Mammary epithelial cell (primary cell): ENCODE measurements at regions of chr17 and their contacts with region 1.

Region 1: GRCh38 chr17:1055751-1056645 is 59.1 kb downstream of the TIMM22 start:
- DNase-seq: peak; percentile 27
- H3K4me3 ChIP-seq: no peak overlapping the region
- H3K27ac ChIP-seq: no peak overlapping the region
- H3K4me1 ChIP-seq: peaks cover 5% of the 10 kb centered on the region
- H3K27me3 ChIP-seq: no peaks in the 10 kb centered on the region
- CTCF ChIP-seq: peak; percentile 40 to 75

Region 2: GRCh38 chr17:996554-997344 is 59.2 kb before region 1 on chr17 and contains the start of gene TIMM22:
- CTCF ChIA-PET with region 1: interaction called, 4 read pairs
- dilution Hi-C with region 1: no loop called
- in situ Hi-C with region 1: no loop called
- intact Hi-C with region 1: loop called (anchors 2 kb)
- DNase-seq: peak; percentile 98
- H3K4me3 ChIP-seq: peak within 1 kb of the TSS; percentile 85 to 100 (median 87)
- H3K27ac ChIP-seq: peak within 1 kb of the TSS; percentile 94
- H3K4me1 ChIP-seq: peaks cover 25% of the 10 kb centered on the region
- H3K27me3 ChIP-seq: no peaks in the 10 kb centered on the region
- CTCF ChIP-seq: peak; percentile 93
- total RNA-seq, gene TIMM22: 14.3 to 17.2 TPM

Region 3: DNA sequence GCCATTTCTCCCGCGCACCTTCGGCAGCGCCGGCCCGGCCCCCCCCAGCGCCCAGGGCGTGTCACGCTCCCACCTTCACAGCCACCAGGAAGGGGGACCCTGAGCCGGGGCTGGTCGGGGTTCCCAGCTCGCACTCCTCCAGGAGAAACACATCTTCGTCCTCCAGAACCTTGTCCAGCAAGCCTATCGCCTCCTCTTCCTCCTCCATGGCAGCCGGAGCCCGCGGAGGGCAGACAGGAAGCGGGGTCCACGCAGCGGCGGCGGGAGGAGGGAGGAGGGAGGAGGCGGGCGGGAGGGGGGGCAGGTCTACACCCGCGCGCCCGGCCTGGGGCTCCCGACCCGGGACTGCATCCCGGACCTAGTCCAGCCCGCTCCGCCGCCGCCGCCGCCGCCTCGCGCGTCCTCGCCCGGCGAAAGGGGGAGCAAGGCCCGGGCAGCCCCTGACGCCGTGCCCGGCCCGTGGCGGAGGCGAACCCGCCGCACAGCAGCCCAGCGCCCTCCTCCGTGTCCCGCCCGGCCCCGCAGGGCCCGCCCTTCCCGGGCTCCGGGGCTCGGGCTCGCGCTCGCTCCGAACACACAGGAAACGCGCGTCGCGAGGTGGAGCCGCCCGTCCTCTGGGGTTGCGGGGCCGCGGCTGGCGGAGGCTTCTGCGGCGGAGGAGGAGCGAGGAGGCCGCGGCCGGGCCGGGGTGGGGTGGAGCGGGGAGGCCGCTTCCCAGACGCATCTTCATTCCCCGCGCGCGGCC is 53.0 kb after region 1 on chr17:
- CTCF ChIA-PET with region 1: no interaction called
- dilution Hi-C with region 1: no loop called
- in situ Hi-C with region 1: no loop called
- intact Hi-C with region 1: loop called (anchors 5 kb)
- DNase-seq: peak; percentile 62
- H3K4me3 ChIP-seq: peak overlapping the region; percentile 63 to 75 (median 74)
- H3K27ac ChIP-seq: peak overlapping the region; percentile 54
- H3K4me1 ChIP-seq: peaks cover 42% of the 10 kb centered on the region
- H3K27me3 ChIP-seq: no peaks in the 10 kb centered on the region
- CTCF ChIP-seq: no peak

Region 4: DNA sequence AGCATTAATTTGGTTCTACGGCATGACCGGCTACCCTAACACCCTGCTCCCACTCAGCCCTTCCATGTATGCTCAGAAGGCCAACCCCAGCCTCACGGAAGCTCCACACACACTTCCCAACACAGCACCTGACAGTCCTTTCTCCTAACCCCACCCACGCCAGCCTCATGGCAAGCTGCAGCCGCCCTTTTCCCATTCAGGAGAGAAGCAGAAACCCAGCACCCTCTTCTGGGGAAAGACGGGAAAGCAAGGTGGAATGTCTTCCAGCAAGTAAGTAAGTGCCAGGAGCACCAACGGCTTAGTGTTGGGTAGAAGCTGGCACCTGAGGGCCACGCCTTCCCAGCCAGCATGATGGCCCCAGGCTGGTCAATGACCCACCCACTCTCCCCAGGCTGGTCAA is 91.7 kb after region 1 on chr17:
- CTCF ChIA-PET with region 1: interaction called, 6 read pairs
- dilution Hi-C with region 1: no loop called
- in situ Hi-C with region 1: no loop called
- intact Hi-C with region 1: loop called (anchors 1 kb)
- DNase-seq: peak; percentile 74
- H3K4me3 ChIP-seq: no peak overlapping the region
- H3K27ac ChIP-seq: no peak overlapping the region
- H3K4me1 ChIP-seq: no peaks in the 10 kb centered on the region
- H3K27me3 ChIP-seq: no peaks in the 10 kb centered on the region
- CTCF ChIP-seq: peak; percentile 61 to 81

Region 5: GRCh38 chr17:1251866-1252608 is 196.0 kb after region 1 on chr17:
- CTCF ChIA-PET with region 1: no interaction called
- dilution Hi-C with region 1: loop called (anchors 10 kb)
- in situ Hi-C with region 1: no loop called
- intact Hi-C with region 1: no loop called
- DNase-seq: no peak
- H3K4me3 ChIP-seq: no peak overlapping the region
- H3K27ac ChIP-seq: no peak overlapping the region
- H3K4me1 ChIP-seq: no peaks in the 10 kb centered on the region
- H3K27me3 ChIP-seq: no peaks in the 10 kb centered on the region
- CTCF ChIP-seq: no peak